HEK293 (cell line): ENCODE measurements at regions of chr1 and their contacts with region 1.

Region 1: GRCh38 chr1:197356723-197357533 is 88.9 kb downstream of the CRB1 start:
- H3K4me3 ChIP-seq: no peak overlapping the region
- H3K27ac ChIP-seq: no peak overlapping the region
- H3K4me1 ChIP-seq: no peaks in the 10 kb centered on the region
- CTCF ChIP-seq: peak; percentile 59; the same call in 1 of the 2 replicates

Region 2: GRCh38 chr1:197180252-197180878 is 176.6 kb before region 1 on chr1:
- CTCF ChIA-PET with region 1: interaction called, 41 read pairs
- POLR2A ChIA-PET with region 1: no interaction called
- H3K4me3 ChIP-seq: no peak overlapping the region
- H3K27ac ChIP-seq: no peak overlapping the region
- H3K4me1 ChIP-seq: no peaks in the 10 kb centered on the region
- CTCF ChIP-seq: peak; percentile 44

Region 3: DNA sequence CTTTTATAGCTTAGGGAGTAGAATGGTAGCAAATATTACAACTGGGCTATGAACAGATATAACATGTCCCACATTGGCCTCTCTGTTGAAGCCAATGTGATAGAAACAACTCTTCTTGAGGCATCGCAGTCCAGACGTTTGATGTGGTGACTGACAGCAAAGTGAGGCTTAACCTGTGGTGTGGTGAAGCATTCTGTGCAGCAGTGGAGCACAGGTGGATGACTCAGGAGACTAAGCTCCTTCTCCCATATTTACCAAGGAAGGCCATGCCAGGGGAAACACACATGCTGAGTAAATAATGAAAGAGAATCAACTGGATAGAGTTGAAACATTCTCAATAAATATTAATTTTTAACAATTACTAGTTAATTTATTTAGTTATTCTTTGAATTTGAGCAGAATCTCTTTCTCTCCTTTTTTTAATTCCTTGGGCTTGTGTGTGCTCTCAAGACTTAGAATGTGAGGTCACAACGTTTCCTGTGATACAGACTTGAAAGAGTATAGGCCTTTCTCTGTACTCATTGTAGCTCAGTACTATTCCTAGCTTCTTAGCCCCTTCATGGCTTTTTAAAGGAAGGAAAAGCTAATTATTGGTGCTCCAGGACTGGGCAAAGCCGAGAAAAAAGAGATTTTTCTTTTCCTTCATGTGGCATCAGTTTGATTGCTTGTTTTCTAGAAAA is 71.3 kb before region 1 on chr1:
- CTCF ChIA-PET with region 1: no interaction called
- POLR2A ChIA-PET with region 1: no interaction called
- H3K4me3 ChIP-seq: no peak overlapping the region
- H3K27ac ChIP-seq: no peak overlapping the region
- H3K4me1 ChIP-seq: no peaks in the 10 kb centered on the region
- CTCF ChIP-seq: no peak

Region 4: GRCh38 chr1:197327776-197328364 is 29.1 kb before region 1 on chr1:
- CTCF ChIA-PET with region 1: interaction called, 18 read pairs
- POLR2A ChIA-PET with region 1: no interaction called
- H3K4me3 ChIP-seq: no peak overlapping the region
- H3K27ac ChIP-seq: no peak overlapping the region
- H3K4me1 ChIP-seq: no peaks in the 10 kb centered on the region
- CTCF ChIP-seq: 0 out of 2 replicates have a peak, but pooled peaks have one; percentile 26

Region 5: DNA sequence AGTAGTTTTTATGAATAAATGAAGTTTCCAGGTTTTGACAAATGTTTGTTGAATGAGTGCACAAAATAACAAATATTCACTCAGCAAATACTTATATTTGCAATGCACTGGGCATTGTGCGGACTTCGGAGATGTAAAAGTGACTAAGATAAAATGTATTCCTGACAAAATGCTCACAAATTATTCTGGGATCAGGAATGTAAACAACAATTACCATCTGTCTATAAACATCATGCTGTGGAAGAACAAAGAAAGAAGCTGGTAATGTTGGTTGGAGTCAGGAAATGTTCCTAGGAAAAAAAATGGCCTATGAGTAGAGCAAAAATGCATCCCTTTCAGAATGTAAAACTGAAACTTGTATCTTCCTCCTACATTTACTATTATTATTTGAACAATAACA is 20.4 kb before region 1 on chr1:
- CTCF ChIA-PET with region 1: interaction called, 11 read pairs
- POLR2A ChIA-PET with region 1: no interaction called
- H3K4me3 ChIP-seq: no peak overlapping the region
- H3K27ac ChIP-seq: no peak overlapping the region
- H3K4me1 ChIP-seq: no peaks in the 10 kb centered on the region
- CTCF ChIP-seq: no peak

Region 6: GRCh38 chr1:197343663-197344273 is 13.2 kb before region 1 on chr1:
- CTCF ChIA-PET with region 1: interaction called, 11 read pairs
- POLR2A ChIA-PET with region 1: no interaction called
- H3K4me3 ChIP-seq: no peak overlapping the region
- H3K27ac ChIP-seq: no peak overlapping the region
- H3K4me1 ChIP-seq: no peaks in the 10 kb centered on the region
- CTCF ChIP-seq: no peak